Mammary epithelial cell (primary cell): ENCODE measurements at regions of chr14 and their contacts with region 1.

Region 1: DNA sequence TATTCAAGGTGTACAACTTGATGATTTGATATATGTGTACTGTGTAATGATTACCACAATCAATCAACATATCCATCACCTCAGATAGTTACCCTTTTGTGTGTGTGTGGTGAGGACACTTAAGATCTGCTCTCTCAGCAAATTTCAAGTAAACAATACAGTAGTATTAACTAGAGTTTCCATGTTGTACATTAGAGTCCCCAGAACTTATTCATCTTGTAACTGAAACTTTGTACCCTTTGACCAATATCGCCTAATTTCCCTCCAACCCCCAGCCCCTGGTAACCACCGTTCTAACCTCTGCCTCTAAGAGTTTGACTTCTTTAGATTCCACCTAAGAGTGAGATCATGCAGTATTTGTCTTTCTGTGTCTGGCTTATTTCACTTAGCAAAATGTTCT is 12.1 kb downstream of the ADCK1 start:
- DNase-seq: no peak
- H3K4me3 ChIP-seq: no peak overlapping the region
- H3K27ac ChIP-seq: no peak overlapping the region
- H3K4me1 ChIP-seq: no peaks in the 10 kb centered on the region
- H3K27me3 ChIP-seq: no peaks in the 10 kb centered on the region
- CTCF ChIP-seq: no peak

Region 2: GRCh38 chr14:77782202-77782601 is 29.8 kb before region 1 on chr14:
- CTCF ChIA-PET with region 1: no interaction called
- dilution Hi-C with region 1: loop called (anchors 5 kb)
- in situ Hi-C with region 1: no loop called
- intact Hi-C with region 1: no loop called
- DNase-seq: no peak
- H3K4me3 ChIP-seq: no peak overlapping the region
- H3K27ac ChIP-seq: no peak overlapping the region
- H3K4me1 ChIP-seq: no peaks in the 10 kb centered on the region
- H3K27me3 ChIP-seq: no peaks in the 10 kb centered on the region
- CTCF ChIP-seq: no peak